ENCODE measurements at regions of chr19 and their contacts with region 1.

Region 1: GRCh38 chr19:34393629-34394028 is 10.6 kb upstream of the PDCD2L start:
- DNase-seq: no peak
- ATAC-seq: no peak
- H3K4me3 Mint-ChIP-seq: no peak overlapping the region
- H3K27ac Mint-ChIP-seq: no peak overlapping the region
- H3K4me1 Mint-ChIP-seq: no peaks in the 10 kb centered on the region
- H3K27me3 Mint-ChIP-seq: no peaks in the 10 kb centered on the region

Region 2: DNA sequence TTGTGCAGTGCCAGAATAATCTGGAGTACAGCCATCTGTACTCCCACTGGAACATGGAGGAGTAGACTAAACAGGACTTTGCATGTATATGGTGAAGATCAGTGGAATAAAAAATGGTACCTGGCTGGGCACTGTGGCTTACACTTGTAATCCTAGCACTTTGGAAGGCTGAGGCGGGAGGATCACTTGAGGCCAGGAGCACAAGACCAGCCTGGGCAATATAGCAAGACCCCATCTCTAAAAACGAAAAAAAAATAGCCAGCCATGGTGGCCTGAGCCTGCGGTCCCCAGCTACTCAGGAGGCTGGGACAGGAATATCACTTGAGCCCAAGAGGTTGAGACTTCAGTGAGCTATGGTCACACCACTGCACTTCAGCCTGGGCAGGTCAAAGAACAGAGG is 54.6 kb after region 1 on chr19:
- CTCF ChIA-PET with region 1: no interaction called
- POLR2A ChIA-PET with region 1: interaction called, 3 read pairs
- intact Hi-C with region 1: loop called in 1 of 2 experiments (anchors 5 kb)
- DNase-seq: no peak
- ATAC-seq: no peak
- H3K4me3 Mint-ChIP-seq: no peak overlapping the region
- H3K27ac Mint-ChIP-seq: peak overlapping the region; percentile 9
- H3K4me1 Mint-ChIP-seq: peaks cover 2% of the 10 kb centered on the region
- H3K27me3 Mint-ChIP-seq: no peaks in the 10 kb centered on the region